Keratinocyte (primary cell): ENCODE measurements at regions of chr7 and their contacts with region 1.

Region 1: GRCh38 chr7:83655951-83656556 is 7.1 kb upstream of the SEMA3E start:
- DNase-seq: no peak
- H3K4me3 ChIP-seq: no peak overlapping the region
- H3K27ac ChIP-seq: no peak overlapping the region
- H3K4me1 ChIP-seq: no peaks in the 10 kb centered on the region
- H3K27me3 ChIP-seq: no peaks in the 10 kb centered on the region
- CTCF ChIP-seq: peak; percentile 60 to 77 (median 73)

Region 2: GRCh38 chr7:83410989-83411591 is 245.0 kb before region 1 on chr7:
- dilution Hi-C with region 1: loop called (anchors 25 kb)
- DNase-seq: no peak
- H3K4me3 ChIP-seq: no peak overlapping the region
- H3K27ac ChIP-seq: no peak overlapping the region
- H3K4me1 ChIP-seq: peaks cover 4% of the 10 kb centered on the region
- H3K27me3 ChIP-seq: no peaks in the 10 kb centered on the region
- CTCF ChIP-seq: peak in 2 of 3 experiments; percentile 29 to 52

Region 3: GRCh38 chr7:83778073-83778443 is 122.0 kb after region 1 on chr7:
- dilution Hi-C with region 1: no loop called
- DNase-seq: no peak
- H3K4me3 ChIP-seq: no peak overlapping the region
- H3K27ac ChIP-seq: no peak overlapping the region
- H3K4me1 ChIP-seq: no peaks in the 10 kb centered on the region
- H3K27me3 ChIP-seq: no peaks in the 10 kb centered on the region
- CTCF ChIP-seq: no peak